Thyroid gland (tissue), 4 donors: ENCODE measurements at regions of chr4 and their contacts with region 1.

Region 1: DNA sequence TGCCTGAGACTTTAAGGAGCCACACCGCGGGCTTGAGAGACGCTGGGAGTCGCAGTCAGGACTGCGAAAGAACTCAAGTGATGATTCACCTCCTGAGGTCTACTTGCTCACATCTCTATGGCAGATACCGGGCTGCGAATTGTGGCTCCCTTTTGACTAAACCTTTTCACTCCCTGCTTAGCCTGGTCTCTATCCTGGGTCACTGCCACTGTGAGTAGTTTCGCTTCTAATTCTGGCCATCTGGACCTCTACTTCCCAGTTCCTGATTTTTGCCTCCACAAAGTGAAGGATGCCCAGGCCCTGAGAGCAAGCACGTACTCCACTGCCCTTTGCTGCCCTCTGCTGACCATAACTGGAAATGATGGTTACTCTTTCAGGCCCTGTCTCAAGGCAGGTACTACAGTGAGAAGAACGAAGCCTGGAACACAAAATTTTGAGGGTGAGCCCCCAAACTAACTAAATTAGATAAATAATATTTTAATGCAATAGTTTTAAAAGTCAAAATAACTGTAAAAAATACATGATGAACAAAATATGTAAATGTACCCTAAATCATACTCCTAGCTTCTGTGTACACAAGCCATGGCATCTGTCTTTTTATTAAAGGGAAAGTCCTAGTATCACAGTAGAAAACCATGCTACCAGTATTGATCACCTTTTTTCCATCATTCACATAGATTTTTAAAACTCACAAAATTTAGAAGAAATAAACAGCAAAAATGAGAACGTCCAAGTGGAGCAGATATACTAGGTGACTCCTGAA is 16.7 kb downstream of the MAD2L1 start:
- DNase-seq: peak; percentile 73 to 76
- H3K4me3 ChIP-seq: no peak overlapping the region
- H3K27ac ChIP-seq: no peak overlapping the region
- H3K4me1 ChIP-seq: no peaks in the 10 kb centered on the region
- H3K27me3 ChIP-seq: no peaks in the 10 kb centered on the region
- CTCF ChIP-seq: peak; percentile 47 to 88 (median 74)
- POLR2A ChIP-seq: no peak

Region 2: DNA sequence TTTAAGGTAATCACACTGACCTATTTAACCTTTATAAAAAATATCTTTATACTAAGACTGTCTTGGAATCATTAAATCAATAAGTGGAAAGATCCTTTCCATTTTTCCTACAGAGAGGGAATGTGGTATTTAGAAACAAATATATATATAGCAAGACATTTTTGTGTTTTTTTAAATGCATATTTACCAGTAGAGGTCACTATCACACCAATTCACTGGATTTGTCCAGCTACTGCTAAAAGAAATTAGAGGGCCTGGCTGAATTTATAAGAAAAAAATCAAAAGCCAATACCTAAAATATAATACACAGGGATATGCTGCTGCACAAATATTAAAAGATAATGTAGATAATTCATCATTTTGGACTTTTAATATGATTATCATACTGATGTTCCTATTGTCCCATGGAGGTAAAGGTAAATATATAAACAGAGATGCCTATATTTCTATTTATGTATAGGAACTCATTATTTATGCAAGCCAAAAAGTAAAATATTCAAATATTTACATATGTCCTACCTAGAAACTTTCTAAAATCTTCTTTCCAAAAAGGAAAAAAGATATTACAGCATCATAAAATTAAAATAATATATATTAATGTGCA is 490.8 kb before region 1 on chr4:
- intact Hi-C with region 1: loop called (anchors 5 kb)
- DNase-seq: no peak
- H3K4me3 ChIP-seq: no peak overlapping the region
- H3K27ac ChIP-seq: no peak overlapping the region
- H3K4me1 ChIP-seq: no peaks in the 10 kb centered on the region
- H3K27me3 ChIP-seq: no peaks in the 10 kb centered on the region
- CTCF ChIP-seq: peak in 5 of 6 experiments; percentile 9 to 61 (median 55)
- POLR2A ChIP-seq: no peak

Region 3: GRCh38 chr4:120209701-120210100 is 159.8 kb after region 1 on chr4:
- intact Hi-C with region 1: no loop called
- DNase-seq: no peak
- H3K4me3 ChIP-seq: no peak overlapping the region
- H3K27ac ChIP-seq: no peak overlapping the region
- H3K4me1 ChIP-seq: no peaks in the 10 kb centered on the region
- H3K27me3 ChIP-seq: no peaks in the 10 kb centered on the region
- CTCF ChIP-seq: no peak
- POLR2A ChIP-seq: no peak